K562 (cell line): ENCODE measurements at regions of chr3 and their contacts with region 1.

Region 1: GRCh38 chr3:149401215-149401925 is 23.9 kb upstream of the TM4SF1 start:
- DNase-seq: no peak
- ATAC-seq: no peak
- H3K4me3 ChIP-seq: no peak overlapping the region
- H3K27ac ChIP-seq: no peak overlapping the region
- H3K4me1 ChIP-seq: no peaks in the 10 kb centered on the region
- H3K27me3 ChIP-seq: no peaks in the 10 kb centered on the region
- CTCF ChIP-seq: no peak
- EP300 ChIP-seq: no peak
- POLR2A ChIP-seq: no peak
- RAD21 ChIP-seq: no peak

Region 2: DNA sequence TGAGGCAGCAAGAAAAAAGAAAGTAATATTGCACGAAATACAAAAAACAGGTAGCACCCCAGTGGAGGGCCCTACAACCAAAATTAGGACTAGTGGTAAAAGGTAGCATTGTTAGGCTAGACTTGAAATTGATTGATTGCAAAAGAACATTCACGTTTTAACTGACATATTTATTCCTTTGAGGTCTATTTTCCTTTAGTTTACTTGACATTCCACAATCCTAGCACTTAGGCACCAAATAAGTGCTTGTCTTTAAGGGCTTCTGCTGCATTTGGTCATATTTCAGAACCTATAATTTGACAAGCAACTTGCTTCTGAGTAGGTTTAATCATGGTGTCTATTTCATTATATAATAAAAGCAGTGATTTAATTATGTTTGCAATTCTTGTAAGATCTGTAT is 1346.4 kb before region 1 on chr3:
- CTCF ChIA-PET with region 1: no interaction called
- POLR2A ChIA-PET with region 1: no interaction called
- in situ Hi-C with region 1: loop called (anchors 10 kb)
- intact Hi-C with region 1: no loop called
- DNase-seq: no peak
- ATAC-seq: no peak
- H3K4me3 ChIP-seq: no peak overlapping the region
- H3K27ac ChIP-seq: no peak overlapping the region
- H3K4me1 ChIP-seq: no peaks in the 10 kb centered on the region
- H3K27me3 ChIP-seq: no peaks in the 10 kb centered on the region
- CTCF ChIP-seq: no peak
- EP300 ChIP-seq: no peak
- POLR2A ChIP-seq: no peak
- RAD21 ChIP-seq: no peak

Region 3: DNA sequence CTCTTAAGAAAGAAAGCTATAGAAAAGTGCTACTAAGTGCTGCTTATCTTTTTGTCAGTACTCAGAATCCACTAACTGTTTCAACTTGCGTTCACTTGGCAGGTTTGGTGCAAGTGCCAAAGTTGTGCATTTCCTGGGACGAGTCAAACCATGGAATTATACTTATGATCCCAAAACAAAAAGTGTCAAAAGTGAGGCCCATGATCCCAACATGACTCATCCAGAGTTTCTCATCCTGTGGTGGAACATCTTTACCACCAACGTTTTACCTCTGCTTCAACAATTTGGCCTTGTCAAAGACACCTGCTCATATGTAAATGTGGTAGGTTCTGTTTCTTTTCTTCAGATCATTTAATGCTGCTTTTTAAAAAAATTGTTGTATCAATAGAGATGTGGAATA is 377.4 kb before region 1 on chr3:
- CTCF ChIA-PET with region 1: no interaction called
- POLR2A ChIA-PET with region 1: no interaction called
- in situ Hi-C with region 1: no loop called
- intact Hi-C with region 1: no loop called
- DNase-seq: no peak
- ATAC-seq: no peak
- H3K4me3 ChIP-seq: no peak overlapping the region
- H3K27ac ChIP-seq: no peak overlapping the region
- H3K4me1 ChIP-seq: no peaks in the 10 kb centered on the region
- H3K27me3 ChIP-seq: no peaks in the 10 kb centered on the region
- CTCF ChIP-seq: no peak
- EP300 ChIP-seq: no peak
- POLR2A ChIP-seq: no peak
- RAD21 ChIP-seq: no peak